ENCODE measurements at regions of chr10 and their contacts with region 1.

Region 1: DNA sequence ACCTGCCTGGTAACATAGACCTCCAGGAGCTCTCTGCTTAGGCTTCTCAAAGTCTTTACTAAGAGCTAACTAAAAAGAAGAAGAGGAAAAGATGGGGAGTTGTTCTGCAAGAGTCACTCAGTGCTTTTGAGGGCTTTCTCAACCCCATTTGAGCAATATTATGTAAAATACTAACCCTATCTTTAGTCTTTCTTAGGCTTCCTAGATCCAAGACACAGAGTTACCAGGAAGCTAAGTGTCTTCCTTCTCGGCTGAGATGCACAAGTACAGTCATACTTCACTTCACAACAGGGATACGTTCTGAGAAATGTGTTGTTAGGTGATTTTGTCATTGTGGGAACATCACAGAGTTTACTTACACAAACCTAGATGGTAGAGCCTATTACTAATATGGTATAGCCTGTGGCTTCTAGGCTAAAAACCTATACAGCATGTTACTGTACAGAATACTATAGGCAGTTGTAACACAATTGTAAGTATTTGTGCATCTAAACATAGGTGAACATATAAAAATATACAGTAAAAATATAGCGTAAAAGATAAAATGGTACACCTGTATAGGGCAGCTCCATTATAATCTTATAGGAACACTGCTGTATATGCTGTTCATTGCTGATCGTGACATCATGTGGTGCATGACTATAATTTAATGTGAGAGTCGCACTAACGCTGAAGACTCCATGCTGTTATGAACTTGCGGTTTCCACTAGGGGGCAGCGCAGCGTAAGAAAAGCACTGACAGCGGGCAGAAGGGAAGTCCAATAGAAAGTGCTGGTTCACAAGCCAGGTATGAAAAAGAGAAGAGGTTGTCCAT is 16.3 kb downstream of the ANKRD22 start:
- DNase-seq: peak; percentile 95
- H3K4me3 ChIP-seq: no peak overlapping the region
- H3K27ac ChIP-seq: no peak overlapping the region
- H3K4me1 ChIP-seq: no peaks in the 10 kb centered on the region
- H3K27me3 ChIP-seq: no peaks in the 10 kb centered on the region
- CTCF ChIP-seq: peak; percentile 75

Region 2: DNA sequence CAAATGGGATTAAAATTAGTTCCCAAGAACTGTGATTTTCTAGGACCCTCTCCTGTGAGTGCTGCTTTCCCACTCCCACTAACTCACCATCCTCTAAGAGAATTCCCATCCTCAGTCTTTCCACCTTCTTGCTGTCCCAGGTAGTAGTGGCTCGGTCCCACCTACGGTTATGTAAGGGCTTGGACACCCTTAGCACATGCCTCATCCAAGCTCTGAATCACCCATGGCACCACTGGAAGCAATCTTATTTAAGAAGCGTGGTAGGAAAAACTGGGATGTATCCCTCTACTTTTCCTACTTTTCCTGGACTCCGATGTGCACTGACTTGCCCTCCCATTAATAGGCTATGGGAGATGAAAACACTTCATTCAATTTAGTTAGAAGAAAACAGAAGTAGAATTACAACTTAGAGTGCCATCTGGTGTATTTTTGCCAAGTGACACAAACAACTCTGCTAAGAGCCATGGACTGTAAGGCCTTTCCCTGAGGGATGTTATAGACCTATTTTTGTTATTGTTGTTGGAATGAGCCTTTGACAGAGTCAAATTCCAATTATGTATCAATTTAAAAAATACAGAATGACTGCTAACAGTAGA is 30.1 kb after region 1 on chr10:
- intact Hi-C with region 1: loop called (anchors 2 kb)
- DNase-seq: no peak
- H3K4me3 ChIP-seq: no peak overlapping the region
- H3K27ac ChIP-seq: no peak overlapping the region
- H3K4me1 ChIP-seq: no peaks in the 10 kb centered on the region
- H3K27me3 ChIP-seq: no peaks in the 10 kb centered on the region
- CTCF ChIP-seq: no peak

Region 3: GRCh38 chr10:89100680-89101079 is 265.4 kb after region 1 on chr10:
- intact Hi-C with region 1: no loop called
- DNase-seq: no peak
- H3K4me3 ChIP-seq: no peak overlapping the region
- H3K27ac ChIP-seq: no peak overlapping the region
- H3K4me1 ChIP-seq: no peaks in the 10 kb centered on the region
- H3K27me3 ChIP-seq: no peaks in the 10 kb centered on the region
- CTCF ChIP-seq: no peak

Measured in colonic mucosa (tissue), 4 donors.